Naive thymus-derived CD4-positive, alpha-beta T cell (primary cell): ENCODE measurements at regions of chr4 and their contacts with region 1.

Region 1: DNA sequence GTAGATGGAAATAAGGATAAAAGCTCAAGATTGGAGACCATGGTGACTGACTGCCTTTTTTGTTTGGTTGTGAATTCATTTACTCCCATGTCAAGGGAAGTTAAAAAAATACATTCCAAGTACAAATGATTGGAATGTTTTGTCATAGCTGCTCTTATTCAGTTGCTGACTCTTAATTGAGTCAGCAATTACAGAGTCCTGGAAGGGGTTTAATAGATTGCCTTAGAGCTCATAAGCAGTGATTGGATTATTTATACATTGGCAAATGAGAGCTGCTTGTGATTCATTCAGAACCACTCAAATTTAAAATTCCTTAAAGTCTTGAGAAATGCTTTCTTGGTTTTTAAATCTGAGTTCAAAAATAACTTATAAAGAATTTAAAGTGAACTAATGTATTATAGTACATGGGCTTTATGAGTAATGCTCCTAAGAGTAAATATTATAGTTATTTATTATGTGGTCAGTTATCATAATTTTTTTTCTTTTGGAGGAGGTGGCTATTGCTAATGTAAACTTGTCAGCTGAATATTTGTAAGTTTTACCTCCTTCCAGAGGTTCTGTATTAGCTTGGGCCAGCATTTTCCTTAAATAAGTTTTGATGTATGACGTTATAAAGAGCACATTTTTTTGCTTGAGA is 13.6 kb downstream of the JADE1 start:
- DNase-seq: no peak
- ATAC-seq: no peak
- H3K4me3 ChIP-seq: no peak overlapping the region
- H3K4me3 Mint-ChIP-seq: peak overlapping the region in 2 of 10 donors; percentile 24 to 39
- H3K27ac ChIP-seq: no peak overlapping the region
- H3K27ac Mint-ChIP-seq: no peak overlapping the region
- H3K4me1 ChIP-seq: peaks cover 6 to 20% of the 10 kb centered on the region in 2 donors
- H3K4me1 Mint-ChIP-seq: peaks cover 57 to 94% (median 87%) of the 10 kb centered on the region in 7 donors
- H3K27me3 ChIP-seq: no peaks in the 10 kb centered on the region
- H3K27me3 Mint-ChIP-seq: no peaks in the 10 kb centered on the region

Region 2: DNA sequence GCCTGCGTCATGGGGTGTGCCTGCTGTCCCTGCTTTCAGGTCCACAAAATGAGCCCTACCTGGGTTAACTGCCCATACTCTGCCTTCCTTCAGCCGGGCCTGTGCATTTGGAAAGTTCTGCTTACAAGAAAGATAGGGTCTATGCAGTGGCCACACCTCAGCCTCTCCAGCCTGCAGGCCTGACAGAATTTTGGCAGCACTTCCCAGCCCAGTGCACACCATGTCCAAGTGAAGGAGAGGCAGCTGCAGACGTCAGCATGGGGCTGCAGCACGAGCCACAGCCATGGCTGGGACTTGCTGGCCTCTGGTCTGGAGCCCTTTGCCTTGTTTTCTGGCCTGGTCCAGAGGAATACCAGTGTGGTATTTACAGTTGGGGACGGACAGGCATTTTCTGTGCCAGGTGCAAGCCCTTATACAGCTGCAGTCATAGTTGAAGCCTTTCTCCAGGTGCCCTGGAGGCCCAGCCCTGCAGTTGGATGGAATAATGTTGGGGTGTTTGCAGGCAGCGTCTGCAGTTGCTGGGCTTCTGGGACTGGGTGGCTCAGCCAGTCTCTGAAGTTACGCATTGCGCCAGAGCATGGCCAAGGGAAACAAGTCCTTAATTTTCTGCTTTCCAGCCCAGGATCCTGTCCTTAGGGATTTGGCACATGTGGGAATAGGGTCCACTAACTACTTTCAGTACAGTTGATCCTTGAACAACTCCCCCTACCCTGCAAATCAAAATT is 12.5 kb after region 1 on chr4:
- CTCF ChIA-PET with region 1: no interaction called
- POLR2A ChIA-PET with region 1: interaction called, 3 read pairs
- intact Hi-C with region 1: loop called (anchors 2 kb)
- DNase-seq: no peak
- ATAC-seq: no peak
- H3K4me3 ChIP-seq: no peak overlapping the region
- H3K4me3 Mint-ChIP-seq: peak overlapping the region in 3 of 10 donors; percentile 23 to 43 (median 34)
- H3K27ac ChIP-seq: no peak overlapping the region
- H3K27ac Mint-ChIP-seq: peak overlapping the region in 4 of 9 donors; percentile 30 to 74 (median 50)
- H3K4me1 ChIP-seq: peaks cover 9 to 27% of the 10 kb centered on the region in 2 donors
- H3K4me1 Mint-ChIP-seq: peaks cover 38 to 91% (median 81%) of the 10 kb centered on the region in 7 donors
- H3K27me3 ChIP-seq: no peaks in the 10 kb centered on the region
- H3K27me3 Mint-ChIP-seq: no peaks in the 10 kb centered on the region

Region 3: GRCh38 chr4:128840711-128841318 is 17.7 kb after region 1 on chr4:
- CTCF ChIA-PET with region 1: no interaction called
- POLR2A ChIA-PET with region 1: no interaction called
- intact Hi-C with region 1: loop called (anchors 2 kb)
- DNase-seq: peak in 1 of 9 donors; percentile 14
- ATAC-seq: peak; percentile 36
- H3K4me3 ChIP-seq: no peak overlapping the region
- H3K4me3 Mint-ChIP-seq: peak overlapping the region in 5 of 10 donors; percentile 12 to 41 (median 32)
- H3K27ac ChIP-seq: no peak overlapping the region
- H3K27ac Mint-ChIP-seq: peak overlapping the region; percentile 47 to 88 (median 74)
- H3K4me1 ChIP-seq: peaks cover 15 to 26% of the 10 kb centered on the region in 2 donors
- H3K4me1 Mint-ChIP-seq: peaks cover 39 to 80% (median 69%) of the 10 kb centered on the region in 7 donors
- H3K27me3 ChIP-seq: no peaks in the 10 kb centered on the region
- H3K27me3 Mint-ChIP-seq: no peaks in the 10 kb centered on the region

Region 4: GRCh38 chr4:128871948-128872347 is 48.8 kb after region 1 on chr4:
- CTCF ChIA-PET with region 1: no interaction called
- POLR2A ChIA-PET with region 1: no interaction called
- intact Hi-C with region 1: no loop called
- DNase-seq: no peak
- ATAC-seq: peak; percentile 83
- H3K4me3 ChIP-seq: no peak overlapping the region
- H3K4me3 Mint-ChIP-seq: no peak overlapping the region
- H3K27ac ChIP-seq: no peak overlapping the region
- H3K27ac Mint-ChIP-seq: peak overlapping the region in 3 of 9 donors; percentile 9 to 67 (median 22)
- H3K4me1 ChIP-seq: no peaks in the 10 kb centered on the region
- H3K4me1 Mint-ChIP-seq: peaks cover 0 to 17% (median 7%) of the 10 kb centered on the region in 7 donors
- H3K27me3 ChIP-seq: no peaks in the 10 kb centered on the region
- H3K27me3 Mint-ChIP-seq: no peaks in the 10 kb centered on the region

Region 5: GRCh38 chr4:128930051-128930450 is 106.9 kb after region 1 on chr4:
- CTCF ChIA-PET with region 1: no interaction called
- POLR2A ChIA-PET with region 1: no interaction called
- intact Hi-C with region 1: no loop called
- DNase-seq: no peak
- ATAC-seq: no peak
- H3K4me3 ChIP-seq: no peak overlapping the region
- H3K4me3 Mint-ChIP-seq: no peak overlapping the region
- H3K27ac ChIP-seq: no peak overlapping the region
- H3K27ac Mint-ChIP-seq: no peak overlapping the region
- H3K4me1 ChIP-seq: no peaks in the 10 kb centered on the region
- H3K4me1 Mint-ChIP-seq: peaks cover 0 to 3% (median 0%) of the 10 kb centered on the region in 7 donors
- H3K27me3 ChIP-seq: no peaks in the 10 kb centered on the region
- H3K27me3 Mint-ChIP-seq: no peaks in the 10 kb centered on the region

Region 6: DNA sequence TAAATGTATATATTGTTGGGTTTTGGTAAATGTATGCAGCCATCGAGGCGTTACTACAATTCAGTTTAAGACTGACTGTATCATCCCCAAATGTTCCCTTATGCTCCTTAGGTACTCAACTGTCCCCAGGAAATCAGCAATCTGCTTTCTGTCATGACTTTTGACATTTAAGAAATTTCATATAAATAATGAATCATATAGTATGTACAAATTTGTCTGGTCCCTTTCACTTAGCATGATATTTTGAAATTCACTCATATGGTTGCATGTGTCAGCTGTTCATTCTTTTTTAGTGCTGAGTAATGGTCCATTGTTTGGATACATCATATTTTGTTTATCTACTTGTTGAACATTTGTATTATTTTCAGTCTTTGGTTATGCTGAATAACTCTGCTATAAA is 491.6 kb after region 1 on chr4:
- CTCF ChIA-PET with region 1: no interaction called
- POLR2A ChIA-PET with region 1: no interaction called
- intact Hi-C with region 1: loop called in 1 of 2 experiments (anchors 5 kb)
- DNase-seq: no peak
- ATAC-seq: no peak
- H3K4me3 ChIP-seq: no peak overlapping the region
- H3K4me3 Mint-ChIP-seq: no peak overlapping the region
- H3K27ac ChIP-seq: no peak overlapping the region
- H3K27ac Mint-ChIP-seq: no peak overlapping the region
- H3K4me1 ChIP-seq: no peaks in the 10 kb centered on the region
- H3K4me1 Mint-ChIP-seq: no peaks in the 10 kb centered on the region
- H3K27me3 ChIP-seq: no peaks in the 10 kb centered on the region
- H3K27me3 Mint-ChIP-seq: peaks cover 0 to 19% (median 4%) of the 10 kb centered on the region in 5 donors